Endothelial cell of umbilical vein (primary cell): ENCODE measurements at regions of chr2 and their contacts with region 1.

Region 1: DNA sequence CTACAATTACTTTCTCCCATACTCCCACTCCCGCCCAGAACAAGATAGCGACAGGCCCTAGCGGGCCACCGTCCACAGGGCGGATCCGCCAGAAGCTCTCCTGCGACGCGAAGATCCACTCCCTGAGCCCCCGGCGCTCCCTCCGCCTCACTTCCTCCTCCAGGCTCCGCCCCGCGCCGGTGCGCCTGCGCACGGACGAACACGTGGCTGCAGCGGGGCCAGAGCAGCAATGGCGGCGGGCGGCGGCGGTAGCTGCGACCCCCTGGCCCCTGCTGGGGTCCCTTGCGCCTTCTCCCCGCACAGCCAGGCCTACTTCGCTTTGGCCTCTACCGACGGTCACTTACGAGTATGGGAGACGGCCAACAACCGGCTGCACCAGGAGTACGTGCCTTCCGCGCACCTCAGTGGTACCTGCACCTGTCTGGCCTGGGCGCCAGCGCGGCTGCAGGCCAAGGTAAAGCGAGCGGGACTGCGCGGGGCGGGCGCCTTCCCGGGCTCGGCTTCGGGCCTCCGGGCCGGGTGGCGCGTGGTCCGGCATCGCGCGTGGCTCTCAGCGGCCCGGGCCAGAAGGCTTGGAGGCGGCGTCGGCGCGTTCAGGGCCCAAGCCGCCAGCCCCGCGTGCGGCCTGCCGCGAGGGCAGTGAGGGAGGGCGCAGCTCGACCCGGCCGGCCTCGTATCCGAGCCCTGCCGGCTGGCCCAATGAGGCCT is at the start of gene WDR43:
- DNase-seq: peak; percentile 100
- H3K4me3 ChIP-seq: peak within 1 kb of the TSS; percentile 93 to 98 (median 94)
- H3K27ac ChIP-seq: peak within 1 kb of the TSS; percentile 84
- H3K4me1 ChIP-seq: peaks cover 26% of the 10 kb centered on the region
- H3K27me3 ChIP-seq: no peaks in the 10 kb centered on the region
- CTCF ChIP-seq: no peak
- POLR2A ChIP-seq: peak; percentile 89
- total RNA-seq, gene WDR43: 60.6 and 65.0 TPM in 2 replicates

Region 2: GRCh38 chr2:28870146-28870891 is 24.3 kb before region 1 on chr2 and contains the start of gene TRMT61B:
- CTCF ChIA-PET with region 1: interaction called, 4 read pairs
- POLR2A ChIA-PET with region 1: interaction called, 6 read pairs
- dilution Hi-C with region 1: no loop called
- intact Hi-C with region 1: loop called (anchors 1 kb)
- DNase-seq: peak; percentile 96
- H3K4me3 ChIP-seq: peak within 1 kb of the TSS; percentile 78 to 89 (median 85)
- H3K27ac ChIP-seq: peak within 1 kb of the TSS; percentile 62
- H3K4me1 ChIP-seq: peaks cover 12% of the 10 kb centered on the region
- H3K27me3 ChIP-seq: no peaks in the 10 kb centered on the region
- CTCF ChIP-seq: no peak
- POLR2A ChIP-seq: peak; percentile 90
- total RNA-seq, gene TRMT61B: 13.6 and 14.9 TPM in 2 replicates

Region 3: DNA sequence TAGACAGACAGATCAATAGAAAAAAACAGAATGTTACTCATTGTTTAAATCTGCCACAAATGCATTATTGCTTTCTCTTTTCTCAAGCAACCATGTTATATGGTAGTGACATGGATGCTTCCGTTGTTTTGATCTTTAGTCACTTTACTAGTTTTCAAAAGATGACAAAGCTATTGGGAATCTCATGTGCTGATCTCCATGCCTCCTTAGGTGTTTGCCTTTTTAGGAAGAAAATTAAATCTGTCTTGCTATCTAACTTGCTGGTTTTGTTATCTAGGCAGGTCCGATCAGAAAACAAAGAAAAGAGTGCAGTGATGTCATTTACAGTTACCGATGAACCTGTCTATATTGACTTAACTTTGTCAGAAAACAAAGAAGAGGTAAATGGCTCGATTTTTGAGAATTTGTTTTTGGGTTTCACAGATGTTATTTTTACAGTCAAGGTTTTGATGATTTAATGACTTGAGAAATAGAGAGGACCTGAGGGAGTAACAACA is 23.0 kb after region 1 on chr2:
- CTCF ChIA-PET with region 1: no interaction called
- POLR2A ChIA-PET with region 1: no interaction called
- dilution Hi-C with region 1: no loop called
- intact Hi-C with region 1: no loop called
- DNase-seq: no peak
- H3K4me3 ChIP-seq: no peak overlapping the region
- H3K27ac ChIP-seq: no peak overlapping the region
- H3K4me1 ChIP-seq: no peaks in the 10 kb centered on the region
- H3K27me3 ChIP-seq: no peaks in the 10 kb centered on the region
- CTCF ChIP-seq: no peak
- POLR2A ChIP-seq: no peak

Region 4: DNA sequence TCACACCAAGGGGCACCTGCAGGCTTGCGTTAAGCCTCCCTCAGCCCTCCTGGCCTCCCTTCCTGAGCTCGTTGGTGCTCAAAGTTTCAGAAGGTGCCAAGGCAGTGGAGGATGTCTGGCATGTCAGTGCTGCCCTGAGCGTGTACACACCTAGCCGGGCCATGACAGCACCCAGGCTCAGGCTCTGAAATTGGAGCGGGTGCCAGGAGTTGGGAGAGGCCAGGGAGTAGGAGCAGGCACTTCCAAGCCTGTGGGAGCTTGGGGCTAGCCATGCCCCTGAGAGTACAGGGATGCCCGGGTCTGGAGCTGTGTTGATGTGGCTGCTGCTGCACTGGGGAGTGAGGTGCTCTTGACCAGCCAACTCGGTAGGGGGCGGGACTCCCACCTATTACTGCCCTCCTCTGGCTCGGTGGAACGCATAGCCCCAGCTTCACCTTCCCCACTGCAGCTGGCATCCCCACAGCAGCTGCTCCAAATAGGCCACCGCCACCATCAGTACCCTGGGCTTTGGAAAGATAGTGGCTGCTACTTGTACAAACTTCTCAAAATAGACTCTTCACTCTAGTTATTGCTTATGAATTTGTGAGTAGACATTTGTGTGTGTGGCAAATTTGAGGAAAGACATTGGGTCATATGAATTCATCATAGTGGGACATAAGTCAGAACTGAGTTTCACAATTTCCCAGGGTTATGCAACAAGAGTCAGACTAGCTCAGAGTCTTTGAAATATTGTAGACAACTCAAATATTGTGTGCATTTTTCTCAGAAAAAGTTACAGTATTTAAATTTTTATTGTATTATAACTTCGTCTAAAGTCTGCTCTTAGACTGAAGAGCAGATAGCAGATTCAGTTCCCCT is 186.5 kb after region 1 on chr2:
- CTCF ChIA-PET with region 1: no interaction called
- POLR2A ChIA-PET with region 1: no interaction called
- dilution Hi-C with region 1: no loop called
- intact Hi-C with region 1: no loop called
- DNase-seq: no peak
- H3K4me3 ChIP-seq: no peak overlapping the region
- H3K27ac ChIP-seq: no peak overlapping the region
- H3K4me1 ChIP-seq: no peaks in the 10 kb centered on the region
- H3K27me3 ChIP-seq: peaks cover 0 to 2% of the 10 kb centered on the region in 2 experiments
- CTCF ChIP-seq: no peak
- POLR2A ChIP-seq: no peak